CD8-positive, alpha-beta T cell (primary cell): ENCODE measurements at regions of chr19 and their contacts with region 1.

Region 1: DNA sequence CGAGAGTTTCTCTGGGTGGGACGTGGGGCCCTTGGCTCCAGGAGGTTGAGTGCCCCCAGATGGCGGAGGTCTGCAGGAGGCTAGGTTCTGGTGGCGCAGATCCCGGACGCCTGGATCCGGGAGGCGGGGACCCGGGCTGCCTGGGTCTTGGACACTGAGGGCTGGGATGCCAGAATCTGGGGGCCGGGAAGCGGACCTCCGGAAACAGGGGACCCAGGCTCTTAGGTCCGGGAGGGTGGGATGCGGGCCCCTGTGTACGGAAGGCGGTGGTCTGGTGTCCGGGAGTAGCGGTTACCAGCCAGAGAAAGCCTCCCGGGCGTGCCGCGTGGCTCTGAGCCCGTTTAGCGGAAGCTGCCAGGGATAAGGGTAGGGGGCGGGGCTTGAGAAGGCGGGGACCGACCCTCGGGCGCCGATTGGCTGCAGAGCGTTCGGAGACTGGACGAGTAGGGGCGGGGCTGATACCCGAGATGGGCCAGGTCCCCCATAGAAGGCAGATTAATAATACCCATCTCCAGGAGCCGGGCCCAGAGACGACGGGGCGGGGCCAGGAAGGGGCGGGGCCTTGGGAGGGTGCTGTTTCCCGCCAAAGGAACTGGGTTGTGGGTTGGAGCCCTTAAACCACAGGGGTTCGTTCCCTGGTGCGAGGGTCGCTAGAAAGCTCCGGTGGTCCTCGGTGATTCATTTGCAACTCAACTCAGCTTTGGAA is at the start of gene SLC1A5:
- DNase-seq: peak; percentile 91 to 98 (median 96)
- ATAC-seq: peak; percentile 76
- H3K4me3 ChIP-seq: peak within 1 kb of the TSS; percentile 67 to 85
- H3K4me3 Mint-ChIP-seq: peak within 1 kb of the TSS; percentile 85
- H3K27ac ChIP-seq: peak within 1 kb of the TSS; percentile 51 to 69
- H3K27ac Mint-ChIP-seq: peak within 1 kb of the TSS; percentile 79
- H3K4me1 ChIP-seq: peaks cover 60% of the 10 kb centered on the region
- H3K4me1 Mint-ChIP-seq: peaks cover 59% of the 10 kb centered on the region
- H3K27me3 ChIP-seq: no peaks in the 10 kb centered on the region
- H3K27me3 Mint-ChIP-seq: no peaks in the 10 kb centered on the region
- CTCF ChIP-seq: no peak
- total RNA-seq, gene SLC1A5: 16.6 to 17.4 TPM

Region 2: DNA sequence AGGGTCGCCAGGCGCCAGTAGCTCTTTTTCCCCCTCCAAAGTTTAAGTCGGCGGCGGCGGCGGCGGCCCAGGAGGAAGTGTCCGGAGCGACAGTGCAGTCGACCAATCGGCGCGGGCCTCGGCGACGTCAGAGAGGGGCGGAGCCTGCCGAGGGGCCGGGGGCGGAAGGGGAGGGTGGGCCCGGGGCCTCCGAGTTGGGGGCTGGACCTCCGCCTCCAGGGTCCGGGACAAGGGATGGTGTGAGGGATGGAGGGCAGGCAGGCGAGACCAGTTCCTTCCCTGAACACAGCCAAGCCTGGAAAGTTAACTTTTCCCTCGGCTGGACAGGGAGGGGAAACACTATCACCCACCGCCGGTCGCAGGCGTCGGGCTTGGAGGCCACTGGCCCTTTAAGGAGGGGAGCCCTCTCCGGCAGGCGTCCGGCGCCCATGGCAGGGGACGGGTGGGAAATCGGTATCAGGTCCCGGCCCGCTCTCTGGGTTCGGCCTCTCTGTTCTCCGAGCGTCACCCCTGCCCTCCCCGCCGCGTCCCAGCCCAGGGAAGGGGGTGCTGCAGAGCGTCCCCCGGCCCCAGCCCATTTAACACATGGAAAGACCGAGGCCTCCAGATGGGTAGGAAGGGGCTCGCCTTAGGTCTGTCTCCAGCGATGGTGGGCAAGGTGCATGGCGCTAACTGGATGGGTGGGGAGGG is 71.2 kb before region 1 on chr19 and contains the start of gene PRKD2:
- CTCF ChIA-PET with region 1: no interaction called
- POLR2A ChIA-PET with region 1: interaction called, 6 read pairs
- intact Hi-C with region 1: loop called in 1 of 2 experiments (anchors 5 kb)
- DNase-seq: peak; percentile 60 to 91 (median 86)
- ATAC-seq: peak; percentile 51
- H3K4me3 ChIP-seq: peak within 1 kb of the TSS; percentile 71 to 73
- H3K4me3 Mint-ChIP-seq: peak within 1 kb of the TSS; percentile 92
- H3K27ac ChIP-seq: peak within 1 kb of the TSS; percentile 77 to 94
- H3K27ac Mint-ChIP-seq: peak within 1 kb of the TSS; percentile 99
- H3K4me1 ChIP-seq: peaks cover 37% of the 10 kb centered on the region
- H3K4me1 Mint-ChIP-seq: peaks cover 45% of the 10 kb centered on the region
- H3K27me3 ChIP-seq: no peaks in the 10 kb centered on the region
- H3K27me3 Mint-ChIP-seq: no peaks in the 10 kb centered on the region
- CTCF ChIP-seq: no peak
- total RNA-seq, gene PRKD2: 81.1 to 89.7 TPM

Region 3: DNA sequence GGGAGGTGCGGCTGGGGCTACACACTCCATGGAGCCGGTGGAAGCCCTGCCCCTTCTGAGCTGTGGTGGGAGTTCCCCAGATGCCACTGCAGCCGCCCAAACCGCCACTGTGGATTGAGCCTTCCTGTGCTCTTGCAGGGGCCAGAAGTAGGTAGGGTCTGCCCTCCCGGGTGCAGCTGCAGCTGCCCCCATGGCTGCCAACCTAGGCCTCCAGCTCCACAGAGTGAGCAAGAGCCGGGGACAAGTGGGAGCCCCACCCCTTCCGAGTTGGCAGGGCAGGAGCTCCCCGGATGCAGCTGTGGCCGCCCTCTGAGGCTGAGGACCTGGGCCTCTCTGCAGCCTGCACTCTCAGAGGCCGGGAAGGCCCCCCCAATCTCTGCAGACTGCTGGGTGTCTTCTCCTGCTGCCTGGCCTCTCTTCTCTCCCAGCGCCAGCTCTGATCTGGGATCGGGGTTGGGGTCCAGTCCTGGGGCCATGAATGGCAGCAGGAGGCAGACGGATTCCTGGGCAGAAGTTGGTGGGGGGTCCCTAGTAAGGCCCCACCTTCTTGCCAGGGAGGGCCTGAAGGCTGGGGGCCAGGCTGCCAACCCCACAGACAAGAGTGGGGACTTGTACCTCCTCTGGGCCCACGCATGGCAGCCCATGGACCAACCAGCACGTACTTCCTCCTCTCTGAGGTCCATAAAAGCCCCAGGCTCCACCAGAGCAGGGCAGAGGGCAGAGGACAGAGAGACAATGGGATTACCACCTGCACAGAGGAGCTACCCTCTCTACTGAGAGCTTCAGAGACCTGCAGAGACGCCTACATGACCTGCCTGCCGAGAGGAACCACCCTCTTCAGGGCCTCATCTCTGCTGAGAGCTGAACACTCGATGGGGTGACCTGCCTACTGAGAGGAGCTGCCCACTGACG is 33.3 kb after region 1 on chr19:
- CTCF ChIA-PET with region 1: interaction called, 3 read pairs
- POLR2A ChIA-PET with region 1: interaction called, 12 read pairs
- intact Hi-C with region 1: loop called (anchors 1 to 5 kb)
- DNase-seq: peak; percentile 40 to 84 (median 61)
- ATAC-seq: peak; percentile 83
- H3K4me3 ChIP-seq: peak overlapping the region in 1 of 2 experiments; percentile 22
- H3K4me3 Mint-ChIP-seq: peak overlapping the region; percentile 49
- H3K27ac ChIP-seq: peak overlapping the region; percentile 15 to 77
- H3K27ac Mint-ChIP-seq: peak overlapping the region; percentile 92
- H3K4me1 ChIP-seq: peaks cover 36% of the 10 kb centered on the region
- H3K4me1 Mint-ChIP-seq: peaks cover 30% of the 10 kb centered on the region
- H3K27me3 ChIP-seq: no peaks in the 10 kb centered on the region
- H3K27me3 Mint-ChIP-seq: no peaks in the 10 kb centered on the region
- CTCF ChIP-seq: no peak

Region 4: GRCh38 chr19:46860125-46860845 is 71.9 kb after region 1 on chr19:
- CTCF ChIA-PET with region 1: no interaction called
- POLR2A ChIA-PET with region 1: no interaction called
- intact Hi-C with region 1: loop called in 1 of 2 experiments (anchors 1 kb)
- DNase-seq: peak; percentile 82 to 98 (median 93)
- ATAC-seq: peak; percentile 80
- H3K4me3 ChIP-seq: peak overlapping the region; percentile 84 to 91
- H3K4me3 Mint-ChIP-seq: peak overlapping the region; percentile 92
- H3K27ac ChIP-seq: peak overlapping the region; percentile 77 to 87
- H3K27ac Mint-ChIP-seq: peak overlapping the region; percentile 94
- H3K4me1 ChIP-seq: peaks cover 44% of the 10 kb centered on the region
- H3K4me1 Mint-ChIP-seq: peaks cover 17% of the 10 kb centered on the region
- H3K27me3 ChIP-seq: no peaks in the 10 kb centered on the region
- H3K27me3 Mint-ChIP-seq: no peaks in the 10 kb centered on the region
- CTCF ChIP-seq: no peak

Region 5: GRCh38 chr19:47225746-47226425 is 437.5 kb after region 1 on chr19:
- CTCF ChIA-PET with region 1: no interaction called
- POLR2A ChIA-PET with region 1: no interaction called
- intact Hi-C with region 1: loop called (anchors 5 to 10 kb)
- DNase-seq: peak; percentile 80 to 95 (median 86)
- ATAC-seq: peak; percentile 47
- H3K4me3 ChIP-seq: peak overlapping the region; percentile 48 to 68
- H3K4me3 Mint-ChIP-seq: peak overlapping the region; percentile 81
- H3K27ac ChIP-seq: peak overlapping the region; percentile 73 to 89
- H3K27ac Mint-ChIP-seq: peak overlapping the region; percentile 92
- H3K4me1 ChIP-seq: peaks cover 40% of the 10 kb centered on the region
- H3K4me1 Mint-ChIP-seq: peaks cover 16% of the 10 kb centered on the region
- H3K27me3 ChIP-seq: no peaks in the 10 kb centered on the region
- H3K27me3 Mint-ChIP-seq: no peaks in the 10 kb centered on the region
- CTCF ChIP-seq: peak; percentile 51